A673 (cell line): ENCODE measurements at regions of chr18 and their contacts with region 1.

Region 1: DNA sequence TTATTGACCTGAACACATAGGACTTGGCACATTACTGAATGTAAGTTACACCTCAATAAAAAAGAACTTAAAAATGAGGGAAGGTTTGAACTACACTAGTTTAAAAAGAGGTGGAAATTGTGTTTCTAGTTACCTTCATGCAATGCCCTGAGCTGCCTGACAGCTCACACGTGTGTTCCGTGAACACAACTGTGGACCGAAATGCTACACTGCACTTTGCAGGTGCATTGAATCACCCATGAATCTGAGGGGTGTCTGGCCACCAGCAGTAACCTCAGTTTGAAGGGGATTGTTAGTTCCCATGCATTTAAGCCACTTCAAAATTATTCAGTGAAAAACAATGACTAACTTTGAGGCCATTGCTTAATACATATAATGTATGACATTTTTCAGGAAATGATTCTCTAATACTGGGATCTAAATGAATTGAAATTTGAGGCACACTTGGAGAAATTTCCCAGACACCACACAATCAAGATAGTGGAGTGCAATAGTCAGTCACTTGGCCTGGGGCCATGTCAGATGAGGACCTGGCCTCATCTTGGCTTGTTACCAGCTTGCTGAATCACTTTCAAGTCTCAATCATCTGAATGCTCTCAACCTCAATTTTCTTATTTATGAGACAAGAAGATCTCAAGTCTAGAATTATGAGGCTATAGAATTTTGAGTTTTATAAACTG is 59.3 kb downstream of the MYL12B start:
- DNase-seq: peak; percentile 80
- H3K4me3 ChIP-seq: no peak overlapping the region
- H3K27ac ChIP-seq: no peak overlapping the region
- H3K4me1 ChIP-seq: peaks cover 16% of the 10 kb centered on the region
- H3K27me3 ChIP-seq: no peaks in the 10 kb centered on the region
- CTCF ChIP-seq: no peak

Region 2: GRCh38 chr18:3623769-3624545 is 302.7 kb after region 1 on chr18:
- CTCF ChIA-PET with region 1: interaction called, 22 read pairs
- POLR2A ChIA-PET with region 1: no interaction called
- intact Hi-C with region 1: no loop called
- DNase-seq: peak; percentile 88
- H3K4me3 ChIP-seq: no peak overlapping the region
- H3K27ac ChIP-seq: peak overlapping the region; percentile 94
- H3K4me1 ChIP-seq: peaks cover 39% of the 10 kb centered on the region
- H3K27me3 ChIP-seq: no peaks in the 10 kb centered on the region
- CTCF ChIP-seq: no peak